HEK293 (cell line): ENCODE measurements at regions of chr18 and their contacts with region 1.

Region 1: GRCh38 chr18:3688699-3689098 is 238.7 kb downstream of the TGIF1 start:
- H3K4me3 ChIP-seq: no peak overlapping the region
- H3K27ac ChIP-seq: peak overlapping the region; percentile 54
- H3K4me1 ChIP-seq: peaks cover 18% of the 10 kb centered on the region
- CTCF ChIP-seq: no peak

Region 2: DNA sequence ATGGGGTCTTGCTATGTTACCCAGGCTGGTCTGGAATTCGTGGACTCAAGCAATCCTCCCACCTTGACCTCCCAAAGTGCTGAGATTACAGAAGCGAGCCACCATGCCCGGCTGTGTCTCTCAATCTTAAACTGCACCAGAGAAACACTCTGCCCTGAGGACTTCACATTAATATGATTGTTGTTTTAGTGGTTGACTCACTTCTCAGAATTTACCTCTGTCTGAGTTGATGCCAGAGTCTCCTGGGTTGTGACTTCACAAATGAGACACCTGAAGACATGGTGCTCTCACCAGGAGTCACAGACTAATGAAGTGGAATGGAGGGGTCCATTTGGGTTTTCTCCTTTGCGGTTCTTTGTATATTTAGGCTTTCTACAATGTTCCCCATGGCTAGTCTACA is 299.7 kb before region 1 on chr18:
- CTCF ChIA-PET with region 1: no interaction called
- POLR2A ChIA-PET with region 1: no interaction called
- H3K4me3 ChIP-seq: no peak overlapping the region
- H3K27ac ChIP-seq: no peak overlapping the region
- H3K4me1 ChIP-seq: no peaks in the 10 kb centered on the region
- CTCF ChIP-seq: no peak

Region 3: DNA sequence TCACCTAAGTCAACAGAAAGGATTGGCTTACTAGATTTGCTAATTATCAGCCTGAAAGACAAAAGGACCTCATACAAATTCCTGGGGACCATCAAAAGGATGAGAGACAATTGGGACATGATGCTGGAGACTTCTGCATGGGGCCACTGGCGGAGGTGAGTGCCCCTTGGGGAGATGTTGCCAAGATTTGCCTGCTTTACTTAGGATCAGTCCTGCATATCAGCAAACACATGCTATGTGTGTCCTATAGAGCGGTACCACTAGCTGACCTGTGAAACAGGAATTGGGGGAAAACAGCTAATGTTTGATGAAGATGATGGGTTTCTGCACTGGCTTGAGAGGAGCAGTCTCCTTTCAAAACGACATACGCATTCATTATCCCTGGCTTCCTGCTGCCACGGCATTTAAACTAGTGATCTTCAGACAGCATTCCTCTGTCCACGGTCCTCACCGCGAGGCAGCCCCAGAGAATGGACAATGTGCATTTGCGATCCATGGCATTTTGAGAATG is 134.6 kb before region 1 on chr18:
- CTCF ChIA-PET with region 1: no interaction called
- POLR2A ChIA-PET with region 1: no interaction called
- H3K4me3 ChIP-seq: no peak overlapping the region
- H3K27ac ChIP-seq: peak overlapping the region; percentile 34; the same call in 1 of the 2 replicates
- H3K4me1 ChIP-seq: peaks cover 19% of the 10 kb centered on the region
- CTCF ChIP-seq: no peak

Region 4: GRCh38 chr18:3703732-3704176 is 15.1 kb after region 1 on chr18:
- CTCF ChIA-PET with region 1: interaction called, 14 read pairs
- POLR2A ChIA-PET with region 1: no interaction called
- H3K4me3 ChIP-seq: no peak overlapping the region
- H3K27ac ChIP-seq: no peak overlapping the region
- H3K4me1 ChIP-seq: no peaks in the 10 kb centered on the region
- CTCF ChIP-seq: peak; percentile 77

Region 5: DNA sequence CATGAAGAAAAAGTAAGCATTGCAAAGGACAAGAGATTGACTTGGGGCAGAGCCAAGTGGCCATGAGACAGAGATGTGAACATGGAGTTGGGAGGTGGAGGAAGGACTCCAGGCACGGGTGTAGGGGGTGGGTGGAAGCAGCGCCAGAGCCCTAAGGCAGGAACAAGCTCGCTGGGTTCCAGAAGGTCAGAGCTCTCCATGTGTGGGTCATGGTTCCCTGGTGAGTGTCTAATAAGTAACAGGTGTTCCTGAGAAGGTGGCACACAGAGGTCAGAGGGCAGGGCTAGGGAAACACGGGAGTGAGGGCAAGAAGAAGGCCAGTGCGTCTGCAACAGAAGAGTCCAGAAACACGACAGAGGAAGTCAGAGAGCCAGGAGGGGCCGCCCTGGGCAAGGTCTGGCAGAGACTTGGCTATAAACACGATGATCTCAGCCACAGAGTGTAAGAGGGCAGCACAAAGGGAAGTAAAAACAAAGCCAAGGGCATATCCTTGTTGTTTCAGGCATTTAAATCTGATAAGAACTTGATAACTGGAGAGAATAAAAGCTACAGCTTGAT is 22.1 kb after region 1 on chr18:
- CTCF ChIA-PET with region 1: interaction called, 10 read pairs
- POLR2A ChIA-PET with region 1: no interaction called
- H3K4me3 ChIP-seq: no peak overlapping the region
- H3K27ac ChIP-seq: 0 out of 2 replicates have a peak overlapping the region, but pooled peaks have one; percentile 24
- H3K4me1 ChIP-seq: peaks cover 8% of the 10 kb centered on the region
- CTCF ChIP-seq: 0 out of 2 replicates have a peak, but pooled peaks have one; percentile 7